B cell (primary cell): ENCODE measurements at regions of chr1 and their contacts with region 1.

Region 1: GRCh38 chr1:117128323-117129079 is 7.0 kb upstream of the TRIM45 start:
- DNase-seq: peak; percentile 32
- ATAC-seq: no peak
- H3K4me3 ChIP-seq: no peak overlapping the region
- H3K4me3 Mint-ChIP-seq: no peak overlapping the region
- H3K27ac ChIP-seq: no peak overlapping the region
- H3K27ac Mint-ChIP-seq: no peak overlapping the region
- H3K4me1 ChIP-seq: no peaks in the 10 kb centered on the region
- H3K4me1 Mint-ChIP-seq: no peaks in the 10 kb centered on the region
- H3K27me3 ChIP-seq: peaks cover 0 to 13% (median 5%) of the 10 kb centered on the region in 4 experiments
- H3K27me3 Mint-ChIP-seq: peaks cover 14% of the 10 kb centered on the region
- CTCF ChIP-seq: peak; percentile 72

Region 2: GRCh38 chr1:117001254-117001927 is 127.1 kb before region 1 on chr1 and contains the start of gene CD101:
- CTCF ChIA-PET with region 1: no interaction called
- POLR2A ChIA-PET with region 1: no interaction called
- intact Hi-C with region 1: no loop called
- DNase-seq: peak; percentile 15
- ATAC-seq: peak; percentile 49
- H3K4me3 ChIP-seq: no peak within 1 kb of the TSS
- H3K4me3 Mint-ChIP-seq: peak within 1 kb of the TSS; percentile 42
- H3K27ac ChIP-seq: peak within 1 kb of the TSS; percentile 39 to 70
- H3K27ac Mint-ChIP-seq: peak within 1 kb of the TSS; percentile 84
- H3K4me1 ChIP-seq: peaks cover 0 to 13% of the 10 kb centered on the region in 2 donors
- H3K4me1 Mint-ChIP-seq: peaks cover 27% of the 10 kb centered on the region
- H3K27me3 ChIP-seq: no peaks in the 10 kb centered on the region
- H3K27me3 Mint-ChIP-seq: no peaks in the 10 kb centered on the region
- CTCF ChIP-seq: no peak
- total RNA-seq, gene CD101: 0.75 TPM in 1 of 2 replicates, not detected in the other

Region 3: DNA sequence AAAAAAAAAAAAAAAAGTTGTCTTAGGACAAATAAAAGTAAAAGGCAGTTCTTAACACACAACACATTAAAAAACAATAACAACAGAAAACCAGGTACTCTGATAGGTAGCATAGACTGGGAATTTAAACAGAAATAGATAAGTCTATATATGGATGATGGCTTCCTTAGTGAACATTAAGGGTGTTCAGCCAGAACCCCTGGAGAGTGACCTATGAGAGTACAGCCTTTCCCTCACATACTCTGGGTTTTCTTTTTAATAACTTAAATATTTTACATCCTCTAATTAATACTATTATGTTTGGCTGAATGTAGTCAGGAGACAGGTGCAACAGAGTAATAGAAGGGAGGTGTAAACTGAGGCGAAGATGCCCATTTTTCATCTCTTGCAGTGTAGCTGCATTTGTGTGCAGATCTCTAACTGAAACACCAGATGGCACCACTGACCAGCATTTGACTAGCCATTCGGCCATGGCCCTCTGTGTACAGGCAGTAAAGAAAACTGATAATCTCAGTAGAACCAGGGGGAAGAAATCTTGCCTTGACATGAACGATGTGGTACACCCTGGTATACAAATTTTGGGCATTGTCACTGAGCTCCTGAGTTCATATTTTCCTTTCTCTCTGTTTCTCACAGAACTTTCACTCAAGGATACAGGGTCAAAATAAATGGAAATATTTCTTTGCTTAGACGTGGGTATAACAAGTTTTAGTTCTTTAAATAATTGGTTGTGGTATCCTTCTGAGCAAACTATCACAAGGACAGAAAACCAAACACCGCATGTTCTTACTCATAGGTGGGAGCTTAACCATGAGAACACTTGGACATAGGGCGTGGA is 60.7 kb before region 1 on chr1:
- CTCF ChIA-PET with region 1: interaction called, 39 read pairs
- POLR2A ChIA-PET with region 1: no interaction called
- intact Hi-C with region 1: loop called (anchors 1 kb)
- DNase-seq: peak; percentile 53
- ATAC-seq: peak; percentile 76
- H3K4me3 ChIP-seq: no peak overlapping the region
- H3K4me3 Mint-ChIP-seq: no peak overlapping the region
- H3K27ac ChIP-seq: no peak overlapping the region
- H3K27ac Mint-ChIP-seq: no peak overlapping the region
- H3K4me1 ChIP-seq: no peaks in the 10 kb centered on the region
- H3K4me1 Mint-ChIP-seq: peaks cover 7% of the 10 kb centered on the region
- H3K27me3 ChIP-seq: no peaks in the 10 kb centered on the region
- H3K27me3 Mint-ChIP-seq: no peaks in the 10 kb centered on the region
- CTCF ChIP-seq: peak; percentile 75

Region 4: GRCh38 chr1:117110774-117111173 is 17.7 kb before region 1 on chr1:
- CTCF ChIA-PET with region 1: interaction called, 27 read pairs
- POLR2A ChIA-PET with region 1: no interaction called
- intact Hi-C with region 1: no loop called
- DNase-seq: no peak
- ATAC-seq: no peak
- H3K4me3 ChIP-seq: no peak overlapping the region
- H3K4me3 Mint-ChIP-seq: no peak overlapping the region
- H3K27ac ChIP-seq: no peak overlapping the region
- H3K27ac Mint-ChIP-seq: no peak overlapping the region
- H3K4me1 ChIP-seq: no peaks in the 10 kb centered on the region
- H3K4me1 Mint-ChIP-seq: peaks cover 3% of the 10 kb centered on the region
- H3K27me3 ChIP-seq: no peaks in the 10 kb centered on the region
- H3K27me3 Mint-ChIP-seq: no peaks in the 10 kb centered on the region
- CTCF ChIP-seq: no peak

Region 5: DNA sequence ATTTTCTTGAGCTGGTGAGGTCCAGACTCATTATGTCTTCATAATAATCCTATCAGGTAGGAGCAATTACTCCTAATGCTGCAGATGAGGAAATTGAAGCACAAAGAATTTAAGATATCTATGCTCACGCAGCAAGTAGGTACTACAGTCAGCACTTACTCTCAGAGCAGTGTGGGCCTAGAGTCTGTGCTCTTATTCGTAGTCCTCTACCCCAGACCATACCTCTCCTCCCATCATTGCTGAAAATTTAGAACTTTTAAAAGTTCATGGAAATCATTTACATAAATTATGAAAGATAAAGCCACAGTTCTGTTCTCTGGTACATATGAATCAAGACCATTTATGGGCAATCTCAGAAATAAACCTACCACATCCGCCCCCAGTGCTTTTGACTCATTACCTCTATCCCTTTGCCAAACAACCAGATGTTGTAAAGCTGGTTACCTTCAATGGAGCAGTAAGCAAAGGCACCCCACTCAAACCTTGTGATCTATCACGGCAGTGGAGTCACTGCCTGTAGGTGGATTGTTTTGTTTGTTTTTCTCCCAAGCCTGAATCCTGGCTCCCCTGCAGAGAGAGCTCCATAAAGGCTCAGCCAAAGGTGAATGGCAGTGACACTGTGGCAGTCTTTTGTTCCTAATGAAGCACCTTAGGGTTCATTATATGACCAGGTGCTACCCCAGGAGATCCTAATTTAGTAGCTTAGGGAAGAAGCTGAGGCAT is 217.9 kb after region 1 on chr1:
- CTCF ChIA-PET with region 1: no interaction called
- POLR2A ChIA-PET with region 1: no interaction called
- intact Hi-C with region 1: no loop called
- DNase-seq: no peak
- ATAC-seq: no peak
- H3K4me3 ChIP-seq: no peak overlapping the region
- H3K4me3 Mint-ChIP-seq: no peak overlapping the region
- H3K27ac ChIP-seq: no peak overlapping the region
- H3K27ac Mint-ChIP-seq: no peak overlapping the region
- H3K4me1 ChIP-seq: no peaks in the 10 kb centered on the region
- H3K4me1 Mint-ChIP-seq: peaks cover 8% of the 10 kb centered on the region
- H3K27me3 ChIP-seq: no peaks in the 10 kb centered on the region
- H3K27me3 Mint-ChIP-seq: peaks cover 2% of the 10 kb centered on the region
- CTCF ChIP-seq: no peak